Transverse colon (tissue), 4 donors: ENCODE measurements at regions of chr3 and their contacts with region 1.

Region 1: GRCh38 chr3:24494618-24495325 is at the start of gene THRB:
- DNase-seq: peak; percentile 77
- H3K4me3 ChIP-seq: peak within 1 kb of the TSS; percentile 51 to 80 (median 70)
- H3K27ac ChIP-seq: peak within 1 kb of the TSS; percentile 91 to 97 (median 94)
- H3K4me1 ChIP-seq: peaks cover 0 to 44% (median 23%) of the 10 kb centered on the region in 4 donors
- H3K27me3 ChIP-seq: no peaks in the 10 kb centered on the region
- CTCF ChIP-seq: peak in 2 of 5 experiments; percentile 18 to 23
- EP300 ChIP-seq: no peak
- POLR2A ChIP-seq: peak; percentile 86
- total RNA-seq, gene THRB: 9.8 to 52.4 (median 31.3) TPM

Region 2: GRCh38 chr3:23999012-23999641 is 495.6 kb before region 1 on chr3:
- in situ Hi-C with region 1: no loop called
- intact Hi-C with region 1: loop called (anchors 10 kb)
- DNase-seq: peak; percentile 71
- H3K4me3 ChIP-seq: no peak overlapping the region
- H3K27ac ChIP-seq: no peak overlapping the region
- H3K4me1 ChIP-seq: peaks cover 0 to 6% (median under 1%) of the 10 kb centered on the region in 4 donors
- H3K27me3 ChIP-seq: no peaks in the 10 kb centered on the region
- CTCF ChIP-seq: peak; percentile 84 to 95 (median 90)
- EP300 ChIP-seq: no peak
- POLR2A ChIP-seq: no peak

Region 3: GRCh38 chr3:24802614-24803013 is 307.8 kb after region 1 on chr3:
- in situ Hi-C with region 1: no loop called
- intact Hi-C with region 1: no loop called
- DNase-seq: no peak
- H3K4me3 ChIP-seq: no peak overlapping the region
- H3K27ac ChIP-seq: no peak overlapping the region
- H3K4me1 ChIP-seq: no peaks in the 10 kb centered on the region
- H3K27me3 ChIP-seq: no peaks in the 10 kb centered on the region
- CTCF ChIP-seq: no peak
- EP300 ChIP-seq: no peak
- POLR2A ChIP-seq: no peak